Left lung (tissue), 14 donors: ENCODE measurements at regions of chr11 and their contacts with region 1.

Region 1: GRCh38 chr11:44036811-44037657 is 10.7 kb upstream of the ACCSL start:
- DNase-seq: peak; percentile 79 to 91 (median 82)
- ATAC-seq: peak; percentile 92
- H3K4me3 ChIP-seq: no peak overlapping the region
- H3K27ac ChIP-seq: no peak overlapping the region
- H3K4me1 ChIP-seq: peaks cover 6 to 7% of the 10 kb centered on the region in 2 donors
- H3K27me3 ChIP-seq: no peaks in the 10 kb centered on the region
- CTCF ChIP-seq: peak; percentile 71 to 75

Region 2: GRCh38 chr11:43895601-43896000 is 141.4 kb before region 1 on chr11:
- intact Hi-C with region 1: loop called in 1 of 2 experiments (anchors 5 kb)
- DNase-seq: no peak
- ATAC-seq: no peak
- H3K4me3 ChIP-seq: no peak overlapping the region
- H3K27ac ChIP-seq: no peak overlapping the region
- H3K4me1 ChIP-seq: no peaks in the 10 kb centered on the region
- H3K27me3 ChIP-seq: no peaks in the 10 kb centered on the region
- CTCF ChIP-seq: no peak

Region 3: DNA sequence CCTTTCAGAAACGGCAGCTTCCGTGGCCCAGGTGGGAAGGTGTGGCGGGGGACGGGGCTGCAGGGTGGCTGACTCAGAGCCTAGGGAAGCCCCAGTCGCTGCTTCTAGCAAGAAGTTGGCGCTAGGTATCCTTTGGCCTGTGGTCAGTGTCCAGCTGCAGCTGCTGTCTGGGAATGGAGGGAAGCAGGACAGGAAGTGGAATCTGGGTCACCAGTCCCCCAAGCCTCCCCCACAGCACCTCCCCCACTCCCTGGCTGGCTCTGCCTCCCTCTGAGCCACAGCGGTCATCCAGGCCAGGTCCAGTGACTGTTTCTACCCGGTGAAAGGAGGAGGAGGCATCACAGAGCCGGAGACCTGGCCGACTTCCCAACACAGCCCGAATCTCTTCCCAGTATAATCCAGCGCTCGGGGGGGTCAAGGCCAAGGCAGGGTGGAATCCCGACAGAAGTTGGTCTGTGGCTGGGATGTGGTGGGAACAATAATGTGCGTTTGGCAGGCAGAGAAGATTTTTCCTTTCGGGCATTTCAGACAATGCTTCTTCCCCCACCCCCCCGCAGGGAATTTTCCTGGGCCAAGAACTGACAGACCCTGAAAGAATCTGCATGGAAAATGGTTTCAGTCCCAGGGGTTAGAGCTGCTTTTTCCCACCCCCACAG is 49.5 kb before region 1 on chr11:
- intact Hi-C with region 1: loop called in 1 of 2 experiments (anchors 10 kb)
- DNase-seq: peak; percentile 76 to 95 (median 90)
- ATAC-seq: peak; percentile 39
- H3K4me3 ChIP-seq: no peak overlapping the region
- H3K27ac ChIP-seq: peak overlapping the region; percentile 33 to 76
- H3K4me1 ChIP-seq: peaks cover 35 to 55% of the 10 kb centered on the region in 2 donors
- H3K27me3 ChIP-seq: no peaks in the 10 kb centered on the region
- CTCF ChIP-seq: no peak

Region 4: GRCh38 chr11:44083906-44084305 is 46.9 kb after region 1 on chr11:
- intact Hi-C with region 1: no loop called
- DNase-seq: no peak
- ATAC-seq: no peak
- H3K4me3 ChIP-seq: no peak overlapping the region
- H3K27ac ChIP-seq: no peak overlapping the region
- H3K4me1 ChIP-seq: no peaks in the 10 kb centered on the region
- H3K27me3 ChIP-seq: no peaks in the 10 kb centered on the region
- CTCF ChIP-seq: no peak